A673 (cell line): ENCODE measurements at regions of chr1 and their contacts with region 1.

Region 1: DNA sequence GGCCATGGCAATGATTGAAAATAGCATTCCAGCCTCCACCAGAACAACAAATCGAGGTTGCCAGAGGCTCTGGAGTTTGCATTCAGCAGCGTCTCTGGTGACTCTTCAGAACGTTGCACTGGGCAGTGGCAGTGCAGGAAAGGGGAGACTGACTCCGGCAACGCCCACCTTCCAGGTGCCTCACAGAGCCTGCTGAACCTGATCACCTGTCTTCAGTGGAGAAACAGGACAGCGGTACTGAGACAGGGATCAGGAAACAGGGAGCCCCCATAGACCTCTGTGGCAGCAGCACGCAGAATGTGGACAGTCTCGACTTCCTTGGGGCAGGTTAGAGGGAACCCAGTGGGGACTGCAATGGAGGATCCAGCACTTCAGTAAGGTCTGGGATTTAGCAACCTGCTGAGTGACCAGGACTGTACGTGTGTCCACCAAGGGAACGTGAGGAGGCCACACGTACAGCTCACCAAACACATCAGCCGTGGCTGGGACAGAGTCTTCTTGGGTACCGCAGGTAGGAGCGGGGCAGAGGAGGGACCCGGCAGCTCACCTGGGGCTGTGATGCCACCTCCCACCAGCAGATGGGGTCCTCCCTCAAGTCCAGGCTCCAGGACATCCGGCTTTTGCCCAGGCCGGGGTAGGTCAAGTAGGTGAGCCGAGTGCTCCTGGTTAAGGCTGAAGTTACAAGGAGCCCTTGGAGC is 128.6 kb downstream of the PRDM2 start:
- DNase-seq: no peak
- H3K4me3 ChIP-seq: no peak overlapping the region
- H3K27ac ChIP-seq: no peak overlapping the region
- H3K4me1 ChIP-seq: no peaks in the 10 kb centered on the region
- H3K27me3 ChIP-seq: no peaks in the 10 kb centered on the region
- CTCF ChIP-seq: peak; percentile 76

Region 2: GRCh38 chr1:13667691-13668090 is 160.9 kb before region 1 on chr1:
- CTCF ChIA-PET with region 1: no interaction called
- POLR2A ChIA-PET with region 1: no interaction called
- intact Hi-C with region 1: loop called (anchors 5 kb)
- DNase-seq: no peak
- H3K4me3 ChIP-seq: no peak overlapping the region
- H3K27ac ChIP-seq: no peak overlapping the region
- H3K4me1 ChIP-seq: peaks cover 20% of the 10 kb centered on the region
- H3K27me3 ChIP-seq: no peaks in the 10 kb centered on the region
- CTCF ChIP-seq: no peak